ENCODE measurements at regions of chr3 and their contacts with region 1.

Region 1: GRCh38 chr3:195259475-195260279 is 11.3 kb downstream of the XXYLT1 start:
- DNase-seq: peak; percentile 93
- ATAC-seq: peak; percentile 84

Region 2: GRCh38 chr3:194682694-194683310 is 576.9 kb before region 1 on chr3:
- intact Hi-C with region 1: loop called (anchors 5 kb)
- DNase-seq: peak; percentile 60
- ATAC-seq: peak; percentile 49

Region 3: DNA sequence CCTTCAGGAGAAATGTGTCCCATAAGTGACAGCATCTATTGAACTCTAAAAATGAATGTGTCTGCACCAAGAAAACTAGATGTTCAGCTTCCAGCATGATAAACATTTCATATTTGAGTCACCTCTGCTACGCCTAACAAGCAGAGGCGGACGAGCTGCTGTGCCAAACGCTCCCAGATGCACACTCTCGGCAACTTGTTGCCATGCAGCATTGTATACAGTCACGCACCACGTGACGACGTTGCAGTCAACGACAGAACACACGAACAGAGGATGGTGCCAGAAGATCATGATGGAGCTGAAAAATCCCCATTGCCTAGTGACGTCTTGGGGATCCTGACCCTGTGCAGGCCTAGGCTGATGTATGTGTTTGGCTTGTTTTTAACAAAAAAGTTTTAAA is 126.2 kb before region 1 on chr3:
- intact Hi-C with region 1: loop called (anchors 10 kb)
- DNase-seq: no peak
- ATAC-seq: peak; percentile 52

Region 4: GRCh38 chr3:195394024-195394423 is 134.3 kb after region 1 on chr3:
- intact Hi-C with region 1: no loop called
- DNase-seq: no peak
- ATAC-seq: no peak

Region 5: GRCh38 chr3:195839282-195840010 is 579.8 kb after region 1 on chr3:
- intact Hi-C with region 1: no loop called
- DNase-seq: no peak
- ATAC-seq: no peak

Measured in left ventricle myocardium superior (tissue), 1 donor.